ENCODE measurements at regions of chr10 and their contacts with region 1.

Region 1: GRCh38 chr10:105950410-105950809 is 1214.1 kb downstream of the SORCS1 start:
- DNase-seq: peak; percentile 31
- CTCF ChIP-seq: peak; percentile 50

Region 2: GRCh38 chr10:106189292-106189691 is 238.9 kb after region 1 on chr10:
- in situ Hi-C with region 1: loop called (anchors 10 kb)
- DNase-seq: peak; percentile 12
- CTCF ChIP-seq: peak; percentile 30